CD4-positive, alpha-beta memory T cell (primary cell): ENCODE measurements at regions of chr1 and their contacts with region 1.

Region 1: GRCh38 chr1:46724991-46725735 is 6.2 kb upstream of the EFCAB14 start:
- DNase-seq: peak; percentile 71 to 74 (median 73)
- H3K4me3 ChIP-seq: no peak overlapping the region
- H3K4me3 Mint-ChIP-seq: no peak overlapping the region
- H3K27ac ChIP-seq: no peak overlapping the region
- H3K27ac Mint-ChIP-seq: no peak overlapping the region
- H3K4me1 ChIP-seq: peaks cover 4% of the 10 kb centered on the region
- H3K4me1 Mint-ChIP-seq: peaks cover 4 to 9% (median 5%) of the 10 kb centered on the region in 4 donors
- H3K27me3 ChIP-seq: no peaks in the 10 kb centered on the region
- H3K27me3 Mint-ChIP-seq: peaks cover 17 to 25% of the 10 kb centered on the region in 2 donors

Region 2: GRCh38 chr1:46442317-46443161 is 282.6 kb before region 1 on chr1:
- CTCF ChIA-PET with region 1: interaction called, 6 read pairs
- POLR2A ChIA-PET with region 1: no interaction called
- intact Hi-C with region 1: loop called (anchors 1 kb)
- DNase-seq: peak; percentile 57 to 64 (median 59)
- H3K4me3 ChIP-seq: peak overlapping the region; percentile 63 to 66
- H3K4me3 Mint-ChIP-seq: peak overlapping the region; percentile 85 to 92 (median 88)
- H3K27ac ChIP-seq: no peak overlapping the region
- H3K27ac Mint-ChIP-seq: peak overlapping the region in 6 of 7 donors; percentile 46 to 85 (median 70)
- H3K4me1 ChIP-seq: peaks cover 15% of the 10 kb centered on the region
- H3K4me1 Mint-ChIP-seq: peaks cover 14 to 32% (median 17%) of the 10 kb centered on the region in 4 donors
- H3K27me3 ChIP-seq: peaks cover under 1% of the 10 kb centered on the region
- H3K27me3 Mint-ChIP-seq: peaks cover 14 to 15% of the 10 kb centered on the region in 2 donors

Region 3: DNA sequence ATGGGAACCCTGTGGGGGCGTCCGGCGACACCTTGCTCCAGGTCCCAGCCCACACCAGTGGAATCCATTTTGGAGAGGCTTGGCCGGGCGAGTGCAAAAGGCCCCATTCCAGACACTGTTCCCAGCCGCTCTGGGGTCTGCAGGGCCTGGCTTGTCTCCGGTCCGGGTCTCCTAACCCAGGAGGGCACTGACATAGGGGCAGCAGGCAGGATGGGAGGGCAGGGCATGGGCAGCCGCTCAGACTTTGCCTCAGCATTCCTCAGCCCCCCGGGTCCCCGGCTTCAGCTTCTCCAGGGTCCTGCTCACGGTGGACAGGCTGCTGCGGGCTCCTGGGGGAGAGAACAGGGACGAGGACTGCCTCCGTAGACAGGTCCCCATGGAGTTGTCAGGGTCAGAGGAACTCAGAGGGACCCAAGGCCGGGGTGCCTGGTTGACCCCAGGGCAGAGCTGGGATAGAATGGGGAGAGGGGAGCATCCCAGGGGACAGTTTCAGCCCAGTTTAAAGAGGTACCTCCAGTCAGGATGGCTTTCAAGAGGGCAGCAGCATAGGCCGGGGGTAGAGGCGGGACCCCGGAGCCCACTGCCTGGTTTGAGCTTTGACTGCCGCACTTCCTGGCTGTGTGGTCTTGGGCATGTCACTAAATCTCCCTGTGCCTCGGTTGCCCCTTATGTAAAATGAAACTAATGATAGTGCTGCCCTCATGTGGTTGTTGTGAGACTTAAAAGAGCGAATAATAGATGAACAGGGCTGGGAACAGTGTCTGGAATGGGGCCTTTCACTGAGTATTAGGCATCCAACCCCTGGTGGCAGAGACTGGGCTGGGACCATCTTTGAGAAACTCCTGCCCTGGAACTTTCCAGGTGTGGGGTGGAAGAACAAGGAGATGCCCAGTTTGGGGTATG is 177.4 kb before region 1 on chr1:
- CTCF ChIA-PET with region 1: interaction called, 11 read pairs
- POLR2A ChIA-PET with region 1: no interaction called
- intact Hi-C with region 1: loop called (anchors 5 kb)
- DNase-seq: peak in 4 of 5 donors; percentile 21 to 30 (median 26)
- H3K4me3 ChIP-seq: no peak overlapping the region
- H3K4me3 Mint-ChIP-seq: peak overlapping the region in 2 of 8 donors; percentile 41 to 46
- H3K27ac ChIP-seq: no peak overlapping the region
- H3K27ac Mint-ChIP-seq: peak overlapping the region in 5 of 7 donors; percentile 21 to 87 (median 62)
- H3K4me1 ChIP-seq: peaks cover 26% of the 10 kb centered on the region
- H3K4me1 Mint-ChIP-seq: peaks cover 13 to 34% (median 19%) of the 10 kb centered on the region in 4 donors
- H3K27me3 ChIP-seq: peaks cover 14% of the 10 kb centered on the region
- H3K27me3 Mint-ChIP-seq: peaks cover 33 to 35% of the 10 kb centered on the region in 2 donors

Region 4: DNA sequence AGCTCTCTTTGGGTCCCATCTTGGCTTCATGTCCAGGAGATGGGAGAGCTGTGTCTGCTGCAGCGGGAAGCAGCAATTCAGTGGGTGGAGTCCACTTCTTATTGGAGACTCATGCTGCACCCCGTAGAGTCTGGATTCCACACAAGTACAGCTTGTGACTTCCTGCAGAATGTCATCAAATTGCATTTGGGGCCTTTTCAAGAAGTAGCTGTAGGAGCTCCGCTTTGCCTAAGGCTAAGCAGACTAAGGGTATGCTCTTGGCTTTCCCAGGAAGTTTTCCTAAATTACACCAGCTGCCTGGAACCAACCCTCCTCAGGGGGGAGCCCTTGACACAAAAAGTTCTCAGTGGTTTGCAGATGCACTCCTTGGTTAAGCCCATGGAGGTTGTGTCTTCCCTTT is 102.8 kb before region 1 on chr1:
- CTCF ChIA-PET with region 1: interaction called, 4 read pairs
- POLR2A ChIA-PET with region 1: no interaction called
- intact Hi-C with region 1: loop called (anchors 2 kb)
- DNase-seq: no peak
- H3K4me3 ChIP-seq: no peak overlapping the region
- H3K4me3 Mint-ChIP-seq: no peak overlapping the region
- H3K27ac ChIP-seq: no peak overlapping the region
- H3K27ac Mint-ChIP-seq: no peak overlapping the region
- H3K4me1 ChIP-seq: peaks cover under 1% of the 10 kb centered on the region
- H3K4me1 Mint-ChIP-seq: peaks cover under 1 to 6% (median 2%) of the 10 kb centered on the region in 4 donors
- H3K27me3 ChIP-seq: no peaks in the 10 kb centered on the region
- H3K27me3 Mint-ChIP-seq: no peaks in the 10 kb centered on the region

Region 5: DNA sequence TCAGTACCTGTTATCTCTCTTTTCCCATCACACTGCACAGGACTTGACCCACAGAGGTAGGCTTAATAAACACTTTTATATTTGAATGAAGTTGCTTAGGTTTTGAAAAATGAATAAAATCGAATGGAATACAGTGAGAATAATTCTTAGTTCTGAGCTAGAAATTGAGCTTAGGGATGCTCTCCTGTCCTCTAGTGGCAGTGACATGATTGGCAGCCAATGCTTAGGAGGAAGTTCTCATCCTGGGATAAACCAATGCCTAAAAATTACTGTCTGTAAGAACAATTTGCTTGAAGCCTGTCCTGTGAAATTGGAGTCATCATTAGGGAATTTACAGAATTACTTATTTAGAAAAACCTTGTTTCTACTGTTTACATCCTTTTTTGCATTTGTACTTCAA is 277.0 kb after region 1 on chr1:
- CTCF ChIA-PET with region 1: no interaction called
- POLR2A ChIA-PET with region 1: no interaction called
- intact Hi-C with region 1: no loop called
- DNase-seq: no peak
- H3K4me3 ChIP-seq: no peak overlapping the region
- H3K4me3 Mint-ChIP-seq: no peak overlapping the region
- H3K27ac ChIP-seq: no peak overlapping the region
- H3K27ac Mint-ChIP-seq: no peak overlapping the region
- H3K4me1 ChIP-seq: no peaks in the 10 kb centered on the region
- H3K4me1 Mint-ChIP-seq: no peaks in the 10 kb centered on the region
- H3K27me3 ChIP-seq: no peaks in the 10 kb centered on the region
- H3K27me3 Mint-ChIP-seq: peaks cover 22 to 31% of the 10 kb centered on the region in 2 donors